B cell (primary cell): ENCODE measurements at regions of chr4 and their contacts with region 1.

Region 1: DNA sequence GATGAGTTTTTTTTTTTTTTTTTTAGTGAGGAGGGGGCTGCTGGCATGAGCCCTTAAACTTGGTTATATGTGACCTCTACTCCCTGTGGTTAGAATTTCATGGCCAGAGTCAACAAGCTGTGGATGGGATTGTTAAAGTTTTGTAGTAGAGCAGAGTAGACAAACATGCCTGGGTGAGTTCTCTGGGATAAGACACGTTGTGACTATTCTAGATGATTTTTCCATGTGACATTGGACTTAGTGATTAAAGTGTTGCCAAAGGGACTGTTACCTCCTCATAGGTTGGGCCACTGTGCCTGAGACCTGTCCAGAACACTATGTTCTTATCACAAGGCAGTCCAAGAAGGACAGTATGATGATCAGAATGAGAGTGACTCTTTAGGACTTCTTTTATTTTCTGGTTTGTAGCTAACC is 28.8 kb upstream of the ALB start:
- DNase-seq: no peak
- ATAC-seq: no peak
- H3K4me3 ChIP-seq: no peak overlapping the region
- H3K4me3 Mint-ChIP-seq: no peak overlapping the region
- H3K27ac ChIP-seq: no peak overlapping the region
- H3K27ac Mint-ChIP-seq: no peak overlapping the region
- H3K4me1 ChIP-seq: no peaks in the 10 kb centered on the region
- H3K4me1 Mint-ChIP-seq: no peaks in the 10 kb centered on the region
- H3K27me3 ChIP-seq: no peaks in the 10 kb centered on the region
- H3K27me3 Mint-ChIP-seq: peaks cover 5% of the 10 kb centered on the region
- CTCF ChIP-seq: no peak

Region 2: DNA sequence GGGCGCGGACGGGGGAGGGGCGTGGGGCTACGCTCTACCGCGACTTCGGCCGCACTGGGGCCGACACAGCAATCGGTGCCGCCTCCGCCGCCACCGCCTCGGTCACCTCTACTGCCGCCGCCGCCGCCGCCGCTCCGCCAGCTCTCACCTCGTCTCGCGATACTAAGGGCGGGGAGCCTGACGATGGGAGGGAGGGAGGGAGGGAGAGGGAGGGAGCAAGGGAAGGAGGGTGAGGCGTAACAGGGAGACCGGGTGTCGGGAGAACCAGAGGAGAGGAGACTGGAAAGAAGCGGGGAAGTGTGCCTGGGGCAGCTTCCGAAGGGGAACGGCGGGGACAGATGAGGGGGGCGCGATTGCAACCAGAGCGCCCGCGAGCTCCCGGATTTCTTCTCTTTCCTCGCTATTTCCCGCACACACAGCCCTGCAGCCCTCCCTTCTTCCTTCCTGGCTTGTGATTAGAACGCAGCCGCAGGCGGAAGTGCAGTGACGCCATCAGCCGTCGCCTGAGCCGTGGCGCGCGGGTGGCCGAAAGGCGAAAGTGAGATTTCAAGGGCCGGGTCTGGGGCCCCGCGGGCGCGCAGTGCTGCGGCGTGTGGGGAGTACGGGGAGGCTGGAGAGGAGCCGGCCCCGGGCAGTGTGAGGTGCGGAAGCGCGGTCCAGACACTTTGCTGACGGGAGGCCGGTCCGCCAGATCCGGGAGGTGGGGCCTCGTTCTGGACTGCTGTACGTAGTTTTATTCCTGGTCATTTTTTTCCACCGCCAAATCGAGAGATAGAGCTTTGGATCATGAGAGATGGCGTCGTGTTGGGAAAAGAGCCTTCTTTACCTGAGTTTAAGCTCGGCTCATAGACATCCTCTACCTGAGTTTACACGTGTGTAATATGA is 116.4 kb before region 1 on chr4 and contains the start of gene ANKRD17:
- CTCF ChIA-PET with region 1: no interaction called
- POLR2A ChIA-PET with region 1: no interaction called
- intact Hi-C with region 1: no loop called
- DNase-seq: peak; percentile 96
- ATAC-seq: peak; percentile 73
- H3K4me3 ChIP-seq: peak within 1 kb of the TSS; percentile 68 to 94 (median 87)
- H3K4me3 Mint-ChIP-seq: peak within 1 kb of the TSS; percentile 100
- H3K27ac ChIP-seq: peak within 1 kb of the TSS; percentile 96 to 98
- H3K27ac Mint-ChIP-seq: peak within 1 kb of the TSS; percentile 100
- H3K4me1 ChIP-seq: peaks cover 30 to 35% of the 10 kb centered on the region in 2 donors
- H3K4me1 Mint-ChIP-seq: peaks cover 56% of the 10 kb centered on the region
- H3K27me3 ChIP-seq: no peaks in the 10 kb centered on the region
- H3K27me3 Mint-ChIP-seq: no peaks in the 10 kb centered on the region
- CTCF ChIP-seq: no peak
- total RNA-seq, gene ANKRD17: 69.4 and 74.6 TPM in 2 replicates

Region 3: GRCh38 chr4:73335679-73336078 is 39.7 kb before region 1 on chr4:
- CTCF ChIA-PET with region 1: no interaction called
- POLR2A ChIA-PET with region 1: no interaction called
- intact Hi-C with region 1: loop called (anchors 1 kb)
- DNase-seq: no peak
- ATAC-seq: no peak
- H3K4me3 ChIP-seq: no peak overlapping the region
- H3K4me3 Mint-ChIP-seq: no peak overlapping the region
- H3K27ac ChIP-seq: no peak overlapping the region
- H3K27ac Mint-ChIP-seq: no peak overlapping the region
- H3K4me1 ChIP-seq: no peaks in the 10 kb centered on the region
- H3K4me1 Mint-ChIP-seq: no peaks in the 10 kb centered on the region
- H3K27me3 ChIP-seq: no peaks in the 10 kb centered on the region
- H3K27me3 Mint-ChIP-seq: peaks cover 15% of the 10 kb centered on the region
- CTCF ChIP-seq: no peak

Region 4: DNA sequence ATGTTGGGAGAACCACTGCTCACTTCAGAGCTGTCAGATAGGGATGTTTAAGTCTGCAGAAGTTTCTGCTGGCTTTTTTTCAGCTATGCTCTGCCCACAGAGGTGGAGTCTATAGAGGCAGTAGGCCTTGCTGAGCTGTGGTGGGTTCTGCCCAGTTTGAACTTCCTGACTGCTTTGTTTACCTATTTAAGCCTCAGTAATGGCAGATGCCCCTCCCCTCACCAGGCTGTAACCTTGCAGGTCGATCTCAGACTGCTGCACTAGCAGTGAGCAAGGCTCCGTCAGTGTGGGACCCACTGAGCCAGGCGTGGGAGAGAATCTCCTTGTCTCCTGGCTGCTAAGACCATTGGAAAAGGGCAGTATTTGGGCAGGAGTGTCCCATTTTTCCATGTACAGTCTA is 143.0 kb after region 1 on chr4:
- CTCF ChIA-PET with region 1: no interaction called
- POLR2A ChIA-PET with region 1: no interaction called
- intact Hi-C with region 1: no loop called
- DNase-seq: no peak
- ATAC-seq: no peak
- H3K4me3 ChIP-seq: no peak overlapping the region
- H3K4me3 Mint-ChIP-seq: no peak overlapping the region
- H3K27ac ChIP-seq: no peak overlapping the region
- H3K27ac Mint-ChIP-seq: no peak overlapping the region
- H3K4me1 ChIP-seq: no peaks in the 10 kb centered on the region
- H3K4me1 Mint-ChIP-seq: no peaks in the 10 kb centered on the region
- H3K27me3 ChIP-seq: no peaks in the 10 kb centered on the region
- H3K27me3 Mint-ChIP-seq: peaks cover 40% of the 10 kb centered on the region
- CTCF ChIP-seq: no peak